ENCODE measurements at regions of chr15 and their contacts with region 1.

Region 1: DNA sequence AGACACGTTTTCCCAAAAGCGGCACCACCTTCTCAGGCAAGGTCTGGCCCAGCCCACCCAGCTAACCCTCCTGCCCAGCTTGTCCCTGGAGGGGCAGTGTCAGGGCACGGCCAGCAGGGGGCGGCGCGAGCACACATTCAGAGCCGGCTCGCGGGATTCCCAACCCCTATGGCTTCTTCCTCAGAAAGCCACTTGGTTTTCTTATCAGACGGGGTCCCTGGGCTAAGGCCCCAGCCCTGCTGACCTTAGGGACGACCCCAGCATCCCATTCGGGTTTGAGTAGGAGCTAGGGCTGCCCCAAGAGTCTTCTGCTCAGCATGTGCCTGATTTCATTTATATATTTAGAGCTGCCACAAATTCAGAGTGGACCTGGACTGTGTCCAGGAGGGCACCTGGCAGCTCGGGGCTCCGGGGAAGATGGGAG is 14.5 kb downstream of the RLBP1 start:
- DNase-seq: peak; percentile 16
- H3K4me3 ChIP-seq: peak overlapping the region; percentile 41
- H3K27ac ChIP-seq: no peak overlapping the region
- H3K27me3 ChIP-seq: no peaks in the 10 kb centered on the region
- CTCF ChIP-seq: peak; percentile 97

Region 2: DNA sequence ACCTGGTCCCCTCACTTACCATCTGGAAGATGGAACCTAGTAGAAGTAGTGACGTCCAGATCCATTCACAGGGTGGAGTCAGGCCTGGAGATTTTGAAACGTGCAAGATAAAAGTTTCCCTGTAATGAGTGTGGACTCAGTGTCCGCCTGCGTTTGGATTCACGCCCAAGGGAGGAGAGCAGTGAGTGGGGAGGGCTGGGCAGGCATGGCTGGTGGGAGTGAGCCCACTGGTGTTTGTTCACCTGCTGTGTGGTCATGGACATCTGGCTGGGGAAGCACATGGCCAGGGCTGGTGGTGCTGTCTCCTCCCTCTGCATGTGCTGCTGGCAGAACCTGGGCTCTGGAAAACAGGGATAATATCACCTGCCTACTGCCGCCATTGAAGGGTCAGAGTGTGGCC is 22.6 kb before region 1 on chr15:
- CTCF ChIA-PET with region 1: interaction called, 20 read pairs
- POLR2A ChIA-PET with region 1: no interaction called
- DNase-seq: no peak
- H3K4me3 ChIP-seq: no peak overlapping the region
- H3K27ac ChIP-seq: no peak overlapping the region
- H3K27me3 ChIP-seq: no peaks in the 10 kb centered on the region
- CTCF ChIP-seq: no peak

Region 3: GRCh38 chr15:89230277-89230676 is 23.4 kb after region 1 on chr15:
- CTCF ChIA-PET with region 1: interaction called, 21 read pairs
- POLR2A ChIA-PET with region 1: no interaction called
- DNase-seq: no peak
- H3K4me3 ChIP-seq: no peak overlapping the region
- H3K27ac ChIP-seq: peak overlapping the region; percentile 11
- H3K27me3 ChIP-seq: peaks cover 5% of the 10 kb centered on the region
- CTCF ChIP-seq: peak; percentile 33

Region 4: DNA sequence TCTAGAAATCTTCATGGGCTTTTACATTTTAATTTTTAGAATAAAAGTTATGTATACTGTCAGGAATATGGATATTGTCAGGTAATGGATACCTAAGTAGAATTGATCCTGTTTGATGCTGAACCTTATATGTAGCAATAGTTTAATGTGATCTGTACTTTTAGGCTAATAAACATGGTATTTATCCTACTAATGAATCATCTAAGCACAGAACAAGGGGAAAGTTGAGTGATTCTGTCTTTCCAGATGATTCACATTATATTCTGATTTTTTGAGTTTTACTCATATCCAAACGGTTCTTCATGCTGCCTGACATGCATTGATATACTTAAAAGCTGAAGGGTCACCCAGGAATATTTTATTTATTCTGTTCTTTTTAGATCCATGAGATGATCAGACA is 71.4 kb after region 1 on chr15:
- CTCF ChIA-PET with region 1: interaction called, 10 read pairs
- POLR2A ChIA-PET with region 1: no interaction called
- DNase-seq: no peak
- H3K4me3 ChIP-seq: no peak overlapping the region
- H3K27ac ChIP-seq: no peak overlapping the region
- H3K27me3 ChIP-seq: no peaks in the 10 kb centered on the region
- CTCF ChIP-seq: no peak

Region 5: GRCh38 chr15:89299896-89300295 is 93.0 kb after region 1 on chr15:
- CTCF ChIA-PET with region 1: interaction called, 108 read pairs
- POLR2A ChIA-PET with region 1: interaction called, 4 read pairs
- DNase-seq: peak; percentile 13
- H3K4me3 ChIP-seq: no peak overlapping the region
- H3K27ac ChIP-seq: no peak overlapping the region
- H3K27me3 ChIP-seq: no peaks in the 10 kb centered on the region
- CTCF ChIP-seq: peak; percentile 45